MCF 10A (cell line): ENCODE measurements at regions of chr9 and their contacts with region 1.

Region 1: DNA sequence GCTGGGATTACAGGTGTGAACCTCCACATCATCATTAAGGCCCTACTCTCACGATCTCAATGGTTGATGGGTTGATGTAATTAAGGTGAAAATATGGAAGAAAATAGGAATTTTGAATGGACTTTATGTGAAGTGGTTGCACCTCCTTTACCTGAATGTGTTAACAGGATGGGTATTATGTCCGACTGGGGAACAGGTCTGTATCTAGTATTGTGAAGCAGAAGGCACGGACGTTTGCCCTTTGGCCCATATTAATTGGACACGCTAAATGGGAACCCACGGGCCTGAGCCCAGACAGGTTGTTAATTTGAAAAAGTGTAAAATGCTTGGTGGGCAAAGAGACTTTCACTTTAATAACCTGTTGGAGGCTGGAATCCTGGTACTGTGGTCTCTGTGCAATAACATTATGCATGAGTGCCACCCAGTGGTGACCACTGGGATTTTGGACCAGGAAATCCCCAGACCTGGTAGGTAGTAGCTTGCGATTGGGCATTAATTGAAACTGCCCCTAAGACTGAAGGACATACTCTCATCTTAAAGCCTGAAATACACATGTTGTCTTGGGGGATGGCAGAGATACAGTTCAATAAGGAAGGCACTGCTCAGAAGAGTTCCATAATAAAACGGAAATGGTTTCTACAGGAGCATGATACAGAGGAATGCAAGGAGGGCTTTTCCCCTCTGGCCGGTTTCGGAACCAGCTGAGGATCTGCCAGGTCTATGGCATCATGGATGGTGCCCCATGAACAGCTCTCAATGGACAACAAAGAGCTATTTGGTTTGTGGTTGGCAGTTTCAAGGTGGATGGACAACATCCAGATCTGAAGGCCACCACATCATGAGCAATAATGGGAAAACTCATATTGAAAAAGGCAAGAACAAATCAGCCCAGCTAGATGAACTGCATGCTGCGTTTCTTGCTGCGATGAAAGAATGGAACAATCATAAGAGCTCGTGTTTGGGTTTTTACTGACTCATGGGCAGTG is 26.2 kb upstream of the BICD2 start:
- DNase-seq: peak; percentile 81
- H3K4me3 Mint-ChIP-seq: no peak overlapping the region
- H3K27ac Mint-ChIP-seq: no peak overlapping the region
- H3K4me1 Mint-ChIP-seq: peaks cover 9% of the 10 kb centered on the region
- H3K27me3 Mint-ChIP-seq: no peaks in the 10 kb centered on the region
- CTCF ChIP-seq: peak; percentile 85

Region 2: DNA sequence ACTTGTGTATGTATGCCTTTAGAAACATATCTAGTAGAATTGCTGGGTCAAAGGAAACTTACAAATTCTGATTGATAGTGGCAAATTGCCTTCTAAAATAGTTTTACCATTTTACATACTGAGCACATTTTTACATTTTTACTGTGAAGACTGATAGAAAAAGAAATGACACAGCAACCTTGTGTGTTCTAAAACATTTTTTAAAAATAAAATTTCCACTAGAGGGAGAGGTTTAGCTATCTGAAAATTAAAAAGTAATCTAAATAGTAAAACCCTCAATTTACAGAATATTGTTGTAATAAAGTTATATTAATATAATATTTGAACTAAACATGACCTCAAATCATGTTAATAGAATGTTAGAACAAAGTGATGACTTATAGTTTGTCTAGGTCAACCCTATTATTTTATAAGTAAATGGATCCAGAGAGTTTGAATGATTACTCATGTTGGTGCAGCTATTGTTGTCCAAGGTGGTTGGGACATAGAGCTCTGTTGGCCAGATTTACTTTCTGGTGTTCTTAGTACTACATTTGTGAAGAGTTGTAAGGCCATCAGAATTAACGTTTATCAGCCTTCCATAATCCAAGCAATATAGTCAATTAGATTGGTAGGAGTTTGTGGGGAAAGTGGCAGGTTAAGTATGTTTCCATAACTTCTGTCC is 447.9 kb before region 1 on chr9:
- CTCF ChIA-PET with region 1: interaction called, 3 read pairs
- POLR2A ChIA-PET with region 1: no interaction called
- intact Hi-C with region 1: loop called (anchors 5 kb)
- DNase-seq: no peak
- H3K4me3 Mint-ChIP-seq: no peak overlapping the region
- H3K27ac Mint-ChIP-seq: peak overlapping the region; percentile 48
- H3K4me1 Mint-ChIP-seq: no peaks in the 10 kb centered on the region
- H3K27me3 Mint-ChIP-seq: no peaks in the 10 kb centered on the region
- CTCF ChIP-seq: peak; percentile 32

Region 3: DNA sequence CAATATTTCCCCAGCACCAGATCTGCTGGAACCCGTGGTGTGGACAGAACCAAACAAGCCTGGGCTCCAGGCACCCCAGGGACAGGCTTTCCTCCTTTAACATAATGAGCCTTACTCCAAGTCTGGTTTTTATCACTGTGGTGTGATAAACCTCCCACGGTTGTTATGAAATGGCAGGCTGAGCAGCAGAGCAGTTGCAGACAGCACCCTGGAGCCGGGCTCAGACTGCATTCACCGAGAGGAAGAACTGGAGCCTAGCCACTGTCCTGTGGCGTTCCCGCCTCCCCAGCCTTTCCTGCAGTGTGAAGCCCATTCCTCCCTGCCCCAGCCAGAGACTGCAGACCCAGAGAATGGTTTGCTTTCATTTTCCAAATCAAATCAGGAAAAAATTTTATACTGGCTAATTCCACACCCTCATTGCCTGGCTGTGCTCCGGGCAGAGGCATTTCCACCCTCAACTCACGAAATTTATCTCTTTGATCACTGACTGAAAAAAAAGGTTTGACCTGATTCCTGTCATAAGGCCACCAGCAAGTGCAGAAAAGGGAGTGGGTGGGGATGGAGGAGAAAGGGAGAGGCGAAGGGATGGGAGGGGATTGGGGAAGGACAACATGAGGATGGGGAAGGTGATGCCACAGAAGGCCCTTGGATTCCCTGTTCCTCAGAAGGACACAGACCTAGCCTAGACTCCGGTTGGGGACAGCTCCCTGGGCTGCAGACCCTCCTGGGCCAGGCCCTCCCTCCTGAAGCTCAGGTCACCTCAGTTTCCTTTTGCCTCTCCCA is 139.8 kb before region 1 on chr9:
- CTCF ChIA-PET with region 1: interaction called, 9 read pairs
- POLR2A ChIA-PET with region 1: interaction called, 7 read pairs
- intact Hi-C with region 1: loop called (anchors 2 kb)
- DNase-seq: no peak
- H3K4me3 Mint-ChIP-seq: no peak overlapping the region
- H3K27ac Mint-ChIP-seq: peak overlapping the region; percentile 78
- H3K4me1 Mint-ChIP-seq: peaks cover 28% of the 10 kb centered on the region
- H3K27me3 Mint-ChIP-seq: no peaks in the 10 kb centered on the region
- CTCF ChIP-seq: no peak

Region 4: DNA sequence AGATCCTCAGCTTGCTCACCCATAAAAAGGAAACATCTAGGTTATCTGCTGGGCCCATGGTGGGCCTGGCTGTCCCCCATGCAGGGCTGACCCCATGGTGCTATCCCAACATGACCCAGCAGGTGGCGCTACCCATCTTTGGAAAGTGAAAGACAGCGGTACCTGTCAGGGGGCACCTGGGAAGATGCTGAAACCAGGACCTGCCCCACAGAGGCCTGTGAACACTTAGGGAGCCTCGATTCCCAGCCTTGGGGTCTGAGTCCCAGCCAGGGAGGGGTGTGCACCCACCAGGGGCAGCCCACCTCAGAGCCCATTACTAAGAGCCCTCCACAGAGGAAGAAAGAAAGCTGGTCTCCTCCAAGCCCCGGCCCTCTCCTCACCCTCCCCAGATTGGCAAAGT is 74.3 kb before region 1 on chr9:
- CTCF ChIA-PET with region 1: interaction called, 28 read pairs
- POLR2A ChIA-PET with region 1: interaction called, 3 read pairs
- intact Hi-C with region 1: loop called (anchors 1 kb)
- DNase-seq: peak; percentile 64
- H3K4me3 Mint-ChIP-seq: peak overlapping the region; percentile 11
- H3K27ac Mint-ChIP-seq: peak overlapping the region; percentile 77
- H3K4me1 Mint-ChIP-seq: peaks cover 7% of the 10 kb centered on the region
- H3K27me3 Mint-ChIP-seq: no peaks in the 10 kb centered on the region
- CTCF ChIP-seq: peak; percentile 87

Region 5: DNA sequence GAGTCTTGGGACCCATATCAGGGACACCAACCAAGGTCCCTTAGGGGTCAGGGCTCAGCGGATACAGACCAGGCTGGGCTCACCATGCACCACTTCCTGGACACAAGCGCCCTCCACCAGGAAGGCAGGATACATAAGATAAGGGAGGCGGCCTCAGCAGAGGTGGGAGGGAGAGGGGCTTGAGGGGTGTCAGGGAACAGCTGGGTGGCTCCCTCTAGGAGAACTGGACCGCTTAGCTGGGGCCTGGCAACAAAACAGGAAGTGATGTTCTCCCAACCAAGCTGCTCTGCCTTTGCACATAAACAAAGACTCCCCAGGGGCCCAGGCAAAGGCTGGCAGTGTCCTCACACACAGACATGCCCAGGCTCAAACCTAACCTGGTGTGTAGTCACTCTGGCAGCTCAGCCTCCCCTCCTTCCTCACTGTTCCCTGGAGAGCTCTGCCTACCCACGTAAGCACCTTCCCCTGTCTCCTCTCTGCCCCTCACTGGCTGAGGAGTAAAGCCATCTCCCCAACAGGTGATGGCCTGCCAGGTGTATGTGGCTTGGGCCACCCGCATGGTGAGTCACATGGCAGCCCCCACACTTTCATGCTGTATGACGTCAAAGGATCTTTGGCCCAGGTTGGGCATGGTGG is 20.4 kb before region 1 on chr9:
- CTCF ChIA-PET with region 1: interaction called, 12 read pairs
- POLR2A ChIA-PET with region 1: interaction called, 8 read pairs
- intact Hi-C with region 1: loop called (anchors 1 kb)
- DNase-seq: peak; percentile 75
- H3K4me3 Mint-ChIP-seq: no peak overlapping the region
- H3K27ac Mint-ChIP-seq: no peak overlapping the region
- H3K4me1 Mint-ChIP-seq: peaks cover 30% of the 10 kb centered on the region
- H3K27me3 Mint-ChIP-seq: no peaks in the 10 kb centered on the region
- CTCF ChIP-seq: no peak